Activated CD4-positive, alpha-beta T cell treated with anti-CD3 and anti-CD28 coated beads for 36 hours (primary cell): ENCODE measurements at regions of chr7 and their contacts with region 1.

Region 1: GRCh38 chr7:50595491-50596102 is 30.4 kb upstream of the DDC start:
- DNase-seq: peak; percentile 41
- ATAC-seq: peak; percentile 55
- H3K4me3 Mint-ChIP-seq: no peak overlapping the region
- H3K27ac Mint-ChIP-seq: no peak overlapping the region
- H3K4me1 Mint-ChIP-seq: peaks cover 16% of the 10 kb centered on the region
- H3K27me3 Mint-ChIP-seq: peaks cover 3% of the 10 kb centered on the region

Region 2: DNA sequence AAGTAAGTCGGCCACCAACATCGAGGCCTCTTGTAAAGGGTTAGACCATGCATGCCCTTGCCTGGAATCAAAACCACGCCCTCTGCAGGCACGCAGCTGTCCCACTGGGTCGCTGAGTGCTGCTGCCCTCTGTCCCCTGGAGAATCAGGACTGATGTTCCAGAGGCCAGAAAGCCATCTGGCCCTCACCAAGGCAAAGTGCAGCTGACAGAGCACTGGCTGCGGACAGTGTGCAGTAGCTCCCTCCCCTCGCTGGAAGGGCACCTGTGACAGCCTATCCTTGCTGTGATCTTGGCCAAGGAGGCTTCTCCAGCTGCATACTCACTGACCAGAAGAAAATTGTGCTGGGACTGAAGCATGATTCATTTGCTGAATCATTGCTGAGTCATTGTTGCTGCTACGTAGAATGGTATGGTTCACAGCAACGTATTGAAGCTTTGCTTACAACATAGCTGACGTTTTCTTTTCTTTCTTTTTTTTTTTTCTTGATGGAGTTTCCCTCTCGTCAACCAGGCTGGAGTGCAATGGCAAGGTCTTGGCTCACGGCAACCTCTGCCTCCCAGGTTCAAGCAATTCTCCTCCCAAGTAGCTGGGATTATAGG is 60.8 kb before region 1 on chr7:
- CTCF ChIA-PET with region 1: no interaction called
- POLR2A ChIA-PET with region 1: no interaction called
- intact Hi-C with region 1: loop called (anchors 2 to 5 kb)
- DNase-seq: peak; percentile 35
- ATAC-seq: peak; percentile 70
- H3K4me3 Mint-ChIP-seq: no peak overlapping the region
- H3K27ac Mint-ChIP-seq: no peak overlapping the region
- H3K4me1 Mint-ChIP-seq: peaks cover 27% of the 10 kb centered on the region
- H3K27me3 Mint-ChIP-seq: peaks cover 12% of the 10 kb centered on the region

Region 3: DNA sequence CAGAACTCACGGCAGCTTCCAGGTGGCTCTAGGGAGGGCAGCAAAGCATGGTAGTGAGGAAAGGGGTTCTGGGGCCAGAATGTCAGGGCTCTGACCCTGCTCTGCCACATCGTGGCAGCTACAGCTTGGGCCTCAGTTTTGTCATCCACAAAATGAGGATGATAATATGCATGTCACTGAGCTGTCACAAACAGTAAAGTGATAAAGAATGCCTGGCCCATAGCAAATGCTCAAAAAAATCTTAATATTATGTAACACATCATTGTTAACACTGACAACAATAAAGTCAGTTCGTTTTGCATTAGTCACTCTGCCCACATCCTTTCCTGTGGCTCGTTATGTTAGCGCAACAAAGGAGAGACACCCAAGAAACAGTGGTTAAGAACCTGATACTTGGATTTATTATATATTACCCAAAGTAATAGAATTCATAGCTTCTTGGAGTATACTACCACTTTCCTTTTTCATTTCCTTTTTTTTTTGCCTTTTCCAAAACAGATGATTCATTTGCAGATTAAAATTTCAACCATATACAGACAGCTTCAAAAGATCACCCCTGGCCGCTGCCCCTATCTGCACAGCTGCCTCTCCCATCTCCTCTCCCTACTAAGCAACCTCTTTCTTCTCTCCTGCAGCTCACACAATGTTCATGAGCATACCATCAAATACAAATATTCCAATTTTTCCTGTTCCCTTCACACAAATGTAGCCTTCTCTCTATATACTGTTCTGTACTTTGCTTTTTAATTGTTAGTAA is 15.1 kb after region 1 on chr7:
- CTCF ChIA-PET with region 1: interaction called, 5 read pairs
- POLR2A ChIA-PET with region 1: no interaction called
- intact Hi-C with region 1: loop called in 1 of 2 experiments (anchors 1 kb)
- DNase-seq: peak; percentile 69
- ATAC-seq: peak; percentile 80
- H3K4me3 Mint-ChIP-seq: no peak overlapping the region
- H3K27ac Mint-ChIP-seq: no peak overlapping the region
- H3K4me1 Mint-ChIP-seq: peaks cover 29% of the 10 kb centered on the region
- H3K27me3 Mint-ChIP-seq: peaks cover 3% of the 10 kb centered on the region

Region 4: GRCh38 chr7:50632561-50633413 is 37.2 kb after region 1 on chr7:
- CTCF ChIA-PET with region 1: interaction called, 5 read pairs
- POLR2A ChIA-PET with region 1: no interaction called
- intact Hi-C with region 1: loop called in 1 of 2 experiments (anchors 2 kb)
- DNase-seq: peak; percentile 72
- ATAC-seq: peak; percentile 84
- H3K4me3 Mint-ChIP-seq: no peak overlapping the region
- H3K27ac Mint-ChIP-seq: no peak overlapping the region
- H3K4me1 Mint-ChIP-seq: no peaks in the 10 kb centered on the region
- H3K27me3 Mint-ChIP-seq: peaks cover 12% of the 10 kb centered on the region

Region 5: DNA sequence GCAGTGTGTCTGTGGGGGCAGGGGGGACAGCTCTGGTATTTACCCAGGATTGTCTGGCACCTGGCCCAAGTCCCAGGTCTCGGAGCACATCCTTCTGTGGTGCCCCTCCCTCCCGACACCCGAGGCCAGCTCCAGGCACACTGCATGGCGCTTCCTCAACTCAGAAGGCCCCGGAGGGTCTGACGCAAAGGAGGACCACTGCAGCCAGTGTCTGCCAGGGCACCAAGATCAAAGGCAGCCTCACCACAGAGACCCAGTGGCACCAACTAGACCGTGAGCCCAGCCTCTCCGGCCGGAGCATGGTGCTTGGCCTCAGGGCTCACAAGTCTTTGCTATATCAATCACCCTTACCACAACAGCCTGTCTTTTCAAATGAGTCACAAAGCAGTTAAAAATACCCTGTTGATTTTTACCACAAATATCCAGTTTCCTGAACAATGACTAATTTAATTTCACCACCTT is 68.9 kb after region 1 on chr7:
- CTCF ChIA-PET with region 1: interaction called, 3 read pairs
- POLR2A ChIA-PET with region 1: no interaction called
- intact Hi-C with region 1: loop called (anchors 1 to 5 kb)
- DNase-seq: peak; percentile 47
- ATAC-seq: peak; percentile 69
- H3K4me3 Mint-ChIP-seq: no peak overlapping the region
- H3K27ac Mint-ChIP-seq: no peak overlapping the region
- H3K4me1 Mint-ChIP-seq: peaks cover 59% of the 10 kb centered on the region
- H3K27me3 Mint-ChIP-seq: peaks cover 2% of the 10 kb centered on the region

Region 6: DNA sequence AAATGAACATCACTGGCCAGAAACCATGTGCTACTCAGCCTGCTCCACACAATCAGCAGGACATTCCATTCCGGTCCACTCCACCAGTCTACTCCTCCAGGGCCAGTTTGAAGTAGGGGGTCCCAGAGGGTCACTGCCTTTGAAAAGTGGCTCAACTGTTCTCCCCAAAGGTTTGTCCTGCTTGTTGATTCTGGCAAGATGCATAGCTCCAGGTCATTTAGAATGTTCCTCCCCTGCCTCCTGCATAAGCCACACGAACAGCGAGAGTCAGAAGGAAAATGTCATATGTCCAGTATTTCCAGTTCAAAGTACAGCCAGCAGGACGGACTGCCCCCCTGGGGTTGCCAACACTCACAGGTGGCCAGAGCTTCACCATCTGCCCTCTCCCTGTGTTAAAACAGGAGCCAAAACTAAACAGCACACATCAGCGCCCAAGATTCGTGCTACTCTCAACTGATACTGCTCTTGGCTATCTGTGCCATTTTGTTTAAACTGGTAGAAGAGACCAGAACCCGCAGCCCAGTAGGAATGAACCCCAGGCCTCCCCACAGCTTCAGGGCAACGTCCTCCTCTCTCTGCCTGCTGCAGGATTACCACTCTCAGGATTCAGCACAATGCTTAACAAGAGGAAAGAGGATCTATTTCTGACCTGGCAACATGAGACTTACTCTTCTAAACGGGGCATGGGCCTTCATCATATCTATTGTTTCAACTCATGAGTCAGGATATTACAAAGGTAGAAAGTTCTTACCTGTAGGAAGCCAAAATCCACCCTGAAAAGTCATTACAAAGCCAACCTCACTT is 175.8 kb after region 1 on chr7:
- CTCF ChIA-PET with region 1: no interaction called
- POLR2A ChIA-PET with region 1: no interaction called
- intact Hi-C with region 1: no loop called
- DNase-seq: no peak
- ATAC-seq: no peak
- H3K4me3 Mint-ChIP-seq: no peak overlapping the region
- H3K27ac Mint-ChIP-seq: no peak overlapping the region
- H3K4me1 Mint-ChIP-seq: no peaks in the 10 kb centered on the region
- H3K27me3 Mint-ChIP-seq: no peaks in the 10 kb centered on the region

Region 7: GRCh38 chr7:50832744-50833143 is 237.1 kb after region 1 on chr7:
- CTCF ChIA-PET with region 1: interaction called, 3 read pairs
- POLR2A ChIA-PET with region 1: no interaction called
- intact Hi-C with region 1: loop called in 1 of 2 experiments (anchors 5 kb)
- DNase-seq: peak; percentile 54
- ATAC-seq: peak; percentile 94
- H3K4me3 Mint-ChIP-seq: no peak overlapping the region
- H3K27ac Mint-ChIP-seq: peak overlapping the region; percentile 7
- H3K4me1 Mint-ChIP-seq: peaks cover 18% of the 10 kb centered on the region
- H3K27me3 Mint-ChIP-seq: peaks cover 34% of the 10 kb centered on the region